ENCODE measurements at regions of chr1 and their contacts with region 1.

Region 1: DNA sequence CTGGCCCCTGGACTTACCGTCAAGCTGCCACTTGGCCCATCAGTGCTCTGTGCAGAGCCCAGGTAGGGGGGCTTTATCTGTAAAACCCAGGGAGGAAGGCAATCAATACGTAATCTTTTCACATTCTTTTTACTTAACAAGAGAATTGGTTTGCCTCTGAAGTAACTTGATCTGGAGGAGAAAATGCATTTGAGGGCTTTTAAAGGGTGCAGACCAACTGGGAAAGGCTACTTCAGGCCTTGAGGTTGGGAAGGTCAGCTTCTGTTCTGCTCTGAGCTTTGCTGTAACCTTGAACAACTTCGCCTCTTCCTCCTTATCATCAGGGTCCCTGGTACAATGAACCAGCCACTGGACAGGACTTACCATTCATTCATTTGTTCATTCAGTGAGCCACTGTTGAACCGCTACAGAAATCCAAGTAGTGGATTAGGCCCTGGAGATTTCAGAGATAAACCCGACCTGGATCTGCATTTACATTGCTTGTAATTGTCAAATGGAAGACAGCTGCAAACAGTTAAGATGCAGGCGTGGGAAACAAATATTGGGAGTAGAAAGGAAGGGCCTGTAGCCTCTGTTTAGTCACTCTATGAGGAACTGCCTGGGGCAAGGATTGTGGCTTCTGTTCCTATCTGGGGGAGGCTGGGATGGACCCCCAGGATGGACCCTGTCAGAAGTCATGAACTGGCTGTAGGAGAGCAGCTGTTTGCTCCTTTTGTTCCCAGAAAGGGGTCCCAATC is 90.9 kb downstream of the MAN1C1 start:
- DNase-seq: no peak
- ATAC-seq: no peak
- H3K4me3 ChIP-seq: no peak overlapping the region
- H3K27ac ChIP-seq: no peak overlapping the region
- H3K4me1 ChIP-seq: peaks cover 16% of the 10 kb centered on the region
- H3K27me3 ChIP-seq: no peaks in the 10 kb centered on the region
- CTCF ChIP-seq: no peak

Region 2: GRCh38 chr1:25447547-25447946 is 259.9 kb before region 1 on chr1:
- intact Hi-C with region 1: no loop called
- DNase-seq: no peak
- ATAC-seq: no peak
- H3K4me3 ChIP-seq: no peak overlapping the region
- H3K27ac ChIP-seq: no peak overlapping the region
- H3K4me1 ChIP-seq: peaks cover 28% of the 10 kb centered on the region
- H3K27me3 ChIP-seq: no peaks in the 10 kb centered on the region
- CTCF ChIP-seq: no peak

Region 3: DNA sequence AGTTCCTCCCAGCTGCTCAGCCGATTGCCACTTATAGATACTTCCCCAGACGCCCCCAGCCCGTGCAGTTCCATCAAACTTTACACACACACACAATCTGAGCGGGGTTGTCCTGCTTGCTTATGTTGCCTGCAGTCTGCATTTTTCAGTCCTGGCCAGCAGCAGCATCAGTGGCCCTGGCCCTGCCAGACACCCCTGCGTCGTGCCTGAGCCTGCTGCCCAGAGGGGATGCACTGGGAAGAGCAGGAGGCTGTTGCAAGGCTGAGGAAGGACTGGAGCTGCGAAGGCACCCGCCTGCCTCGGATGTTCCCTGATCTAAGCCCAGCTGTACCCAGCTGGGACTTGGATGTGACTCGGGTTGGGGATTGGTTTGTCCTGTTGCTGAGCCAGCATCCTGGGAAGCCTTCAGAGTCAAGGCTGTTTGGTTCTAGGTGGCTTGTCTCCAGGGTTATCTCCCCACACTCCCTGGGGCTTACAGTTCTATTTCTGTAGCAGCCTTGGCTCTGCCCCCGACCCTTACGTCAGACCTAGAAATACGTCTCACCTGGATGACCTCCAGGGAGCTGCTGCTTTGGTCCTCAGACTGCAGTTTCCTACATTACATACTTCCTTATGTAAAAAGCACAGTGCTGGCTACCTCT is 48.5 kb before region 1 on chr1:
- intact Hi-C with region 1: no loop called
- DNase-seq: peak; percentile 63 to 89
- ATAC-seq: peak; percentile 95 to 99 (median 98)
- H3K4me3 ChIP-seq: no peak overlapping the region
- H3K27ac ChIP-seq: peak overlapping the region; percentile 62
- H3K4me1 ChIP-seq: peaks cover 26% of the 10 kb centered on the region
- H3K27me3 ChIP-seq: no peaks in the 10 kb centered on the region
- CTCF ChIP-seq: no peak

Region 4: DNA sequence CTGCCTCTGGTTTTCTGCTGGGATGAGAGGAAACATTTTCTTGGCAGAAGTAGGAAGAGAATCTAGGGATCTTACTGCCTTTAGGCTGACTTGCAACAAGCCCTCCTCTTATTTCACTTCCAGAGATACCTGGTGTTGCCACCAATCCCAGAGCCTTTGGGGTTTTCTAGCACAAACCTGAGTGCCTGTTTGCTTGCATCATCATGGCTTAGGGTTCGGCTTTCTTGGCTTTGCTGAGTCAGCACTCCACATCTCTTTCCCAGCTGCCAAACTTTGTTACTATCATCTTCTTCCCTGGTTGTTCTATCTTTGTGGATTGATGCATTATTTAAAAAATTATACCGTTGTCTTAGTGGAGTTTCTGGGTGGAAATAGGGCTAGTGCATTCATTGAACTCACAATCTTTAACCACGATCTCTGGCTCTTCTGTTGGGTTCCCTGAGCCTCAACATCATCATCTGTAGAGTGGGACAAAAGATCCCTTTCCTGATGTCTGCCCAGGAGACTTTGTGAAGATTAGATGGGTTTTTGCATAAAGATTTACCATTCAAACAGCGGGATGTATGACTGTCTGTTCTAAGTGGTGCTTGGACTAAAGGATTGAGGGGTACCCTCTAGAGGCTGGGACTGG is 15.9 kb after region 1 on chr1:
- intact Hi-C with region 1: loop called in 1 of 2 experiments (anchors 2 kb)
- DNase-seq: no peak
- ATAC-seq: no peak
- H3K4me3 ChIP-seq: no peak overlapping the region
- H3K27ac ChIP-seq: no peak overlapping the region
- H3K4me1 ChIP-seq: peaks cover 13% of the 10 kb centered on the region
- H3K27me3 ChIP-seq: no peaks in the 10 kb centered on the region
- CTCF ChIP-seq: no peak

Region 5: DNA sequence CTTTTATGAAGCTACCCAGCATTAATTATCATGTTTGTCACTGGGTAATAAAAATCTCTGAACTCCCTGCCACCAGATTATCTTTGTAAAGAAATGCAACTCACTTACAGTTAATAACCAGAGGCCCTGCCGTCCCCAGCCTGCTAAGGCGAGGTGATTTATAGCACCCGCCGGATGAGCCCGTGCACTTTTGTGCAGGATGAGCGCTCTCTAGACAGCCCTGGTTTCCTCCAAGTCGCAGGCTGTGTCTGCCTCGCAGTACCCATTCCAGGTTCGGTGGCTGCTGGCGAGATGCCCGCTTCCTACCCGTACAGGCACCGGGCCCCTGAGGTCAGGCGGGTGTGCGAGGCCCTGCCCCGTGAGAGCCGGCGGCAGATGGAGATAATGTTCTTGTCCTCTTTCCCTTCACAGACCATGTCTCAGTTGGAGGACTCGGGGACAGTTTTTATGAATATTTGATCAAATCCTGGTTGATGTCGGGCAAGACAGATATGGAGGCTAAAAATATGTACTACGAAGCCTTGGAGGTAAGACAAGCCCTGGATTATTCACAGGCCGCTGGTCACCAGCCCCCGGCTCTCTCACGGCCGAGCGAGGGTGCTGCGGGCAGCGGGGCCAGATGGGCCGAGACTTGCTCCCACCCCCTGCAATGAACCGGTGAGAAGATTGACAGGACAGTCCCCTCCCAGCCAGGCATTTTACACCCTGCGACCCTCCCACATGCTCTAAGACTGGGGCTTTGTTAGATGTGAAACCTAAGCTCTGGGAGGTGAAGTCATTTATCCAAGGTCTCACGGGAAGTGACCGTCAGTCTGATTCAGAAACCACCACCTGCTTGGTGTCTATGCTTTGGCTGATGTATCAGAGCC is 64.0 kb after region 1 on chr1:
- intact Hi-C with region 1: no loop called
- DNase-seq: peak; percentile 51 to 79
- ATAC-seq: peak; percentile 42 to 59 (median 56)
- H3K4me3 ChIP-seq: no peak overlapping the region
- H3K27ac ChIP-seq: peak overlapping the region; percentile 64
- H3K4me1 ChIP-seq: peaks cover 23% of the 10 kb centered on the region
- H3K27me3 ChIP-seq: no peaks in the 10 kb centered on the region
- CTCF ChIP-seq: no peak

Region 6: DNA sequence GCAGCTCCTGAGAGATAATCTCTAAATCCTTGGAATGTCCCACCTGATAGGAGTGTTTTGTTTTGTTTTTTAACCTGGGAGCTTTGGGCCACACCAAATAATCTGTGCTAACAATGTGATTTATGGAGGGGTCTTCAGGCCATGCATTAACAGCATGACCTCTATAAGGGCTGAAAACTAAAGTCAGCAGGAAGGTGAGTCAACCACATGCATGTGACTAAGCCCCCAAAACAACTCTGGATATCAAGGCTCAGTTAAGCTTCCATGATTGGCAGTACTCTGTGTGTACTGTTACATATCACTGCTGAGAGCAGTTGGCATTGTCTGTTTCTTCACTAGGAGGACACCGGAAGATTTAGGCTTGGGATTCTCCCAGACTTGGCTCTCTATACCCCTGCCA is 141.1 kb after region 1 on chr1:
- intact Hi-C with region 1: no loop called
- DNase-seq: no peak
- ATAC-seq: no peak
- H3K4me3 ChIP-seq: no peak overlapping the region
- H3K27ac ChIP-seq: no peak overlapping the region
- H3K4me1 ChIP-seq: no peaks in the 10 kb centered on the region
- H3K27me3 ChIP-seq: no peaks in the 10 kb centered on the region
- CTCF ChIP-seq: no peak